ENCODE measurements at regions of chr17 and their contacts with region 1.

Region 1: GRCh38 chr17:42248351-42249179 is 27.6 kb downstream of the STAT5B start:
- DNase-seq: peak; percentile 50 to 92 (median 80)
- ATAC-seq: peak; percentile 85 to 91
- H3K4me3 Mint-ChIP-seq: peak overlapping the region; percentile 75 to 96 (median 90)
- H3K27ac Mint-ChIP-seq: peak overlapping the region; percentile 96 to 100 (median 98)
- H3K4me1 Mint-ChIP-seq: peaks cover 28 to 74% (median 64%) of the 10 kb centered on the region in 4 donors
- H3K27me3 Mint-ChIP-seq: no peaks in the 10 kb centered on the region

Region 2: DNA sequence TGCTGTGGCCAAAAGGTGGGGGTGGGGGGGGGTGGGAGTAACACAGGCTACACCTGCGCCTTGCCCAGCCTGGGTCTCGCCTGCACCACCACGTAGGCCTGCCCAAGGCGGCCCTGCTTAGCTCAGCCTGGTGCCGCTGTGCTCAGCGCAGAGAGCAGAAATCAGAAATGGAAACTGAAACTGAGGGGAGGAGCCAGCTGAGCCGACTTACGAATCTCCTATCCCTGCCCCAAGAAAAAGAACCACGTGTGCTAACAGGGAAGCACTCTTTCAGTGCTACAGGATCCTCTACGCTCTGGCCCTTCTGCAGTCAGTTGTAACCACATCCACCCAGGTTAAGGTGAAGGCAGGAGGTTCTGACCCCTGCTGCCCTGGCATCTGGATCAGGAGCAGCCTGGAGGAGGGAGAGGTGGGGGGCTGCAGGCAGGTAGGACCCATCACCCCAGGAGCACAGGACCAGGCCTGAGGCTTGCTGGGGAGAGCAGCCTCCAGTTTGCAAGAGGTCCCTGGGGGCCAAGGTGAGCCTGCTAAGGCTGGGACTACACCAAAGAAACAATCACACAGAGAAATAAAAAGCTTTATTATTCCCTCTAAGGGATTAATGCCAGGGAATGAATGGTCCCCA is 135.9 kb before region 1 on chr17 and contains the start of gene DHX58:
- POLR2A ChIA-PET with region 1: no interaction called
- DNase-seq: peak; percentile 56 to 87 (median 76)
- ATAC-seq: peak; percentile 88
- H3K4me3 Mint-ChIP-seq: peak within 1 kb of the TSS; percentile 86 to 98 (median 93)
- H3K27ac Mint-ChIP-seq: peak within 1 kb of the TSS; percentile 93 to 100 (median 97)
- H3K4me1 Mint-ChIP-seq: peaks cover 22 to 67% (median 60%) of the 10 kb centered on the region in 4 donors
- H3K27me3 Mint-ChIP-seq: no peaks in the 10 kb centered on the region
- polyA plus RNA-seq, gene DHX58: 7.3 to 21.7 (median 13.6) TPM

Region 3: DNA sequence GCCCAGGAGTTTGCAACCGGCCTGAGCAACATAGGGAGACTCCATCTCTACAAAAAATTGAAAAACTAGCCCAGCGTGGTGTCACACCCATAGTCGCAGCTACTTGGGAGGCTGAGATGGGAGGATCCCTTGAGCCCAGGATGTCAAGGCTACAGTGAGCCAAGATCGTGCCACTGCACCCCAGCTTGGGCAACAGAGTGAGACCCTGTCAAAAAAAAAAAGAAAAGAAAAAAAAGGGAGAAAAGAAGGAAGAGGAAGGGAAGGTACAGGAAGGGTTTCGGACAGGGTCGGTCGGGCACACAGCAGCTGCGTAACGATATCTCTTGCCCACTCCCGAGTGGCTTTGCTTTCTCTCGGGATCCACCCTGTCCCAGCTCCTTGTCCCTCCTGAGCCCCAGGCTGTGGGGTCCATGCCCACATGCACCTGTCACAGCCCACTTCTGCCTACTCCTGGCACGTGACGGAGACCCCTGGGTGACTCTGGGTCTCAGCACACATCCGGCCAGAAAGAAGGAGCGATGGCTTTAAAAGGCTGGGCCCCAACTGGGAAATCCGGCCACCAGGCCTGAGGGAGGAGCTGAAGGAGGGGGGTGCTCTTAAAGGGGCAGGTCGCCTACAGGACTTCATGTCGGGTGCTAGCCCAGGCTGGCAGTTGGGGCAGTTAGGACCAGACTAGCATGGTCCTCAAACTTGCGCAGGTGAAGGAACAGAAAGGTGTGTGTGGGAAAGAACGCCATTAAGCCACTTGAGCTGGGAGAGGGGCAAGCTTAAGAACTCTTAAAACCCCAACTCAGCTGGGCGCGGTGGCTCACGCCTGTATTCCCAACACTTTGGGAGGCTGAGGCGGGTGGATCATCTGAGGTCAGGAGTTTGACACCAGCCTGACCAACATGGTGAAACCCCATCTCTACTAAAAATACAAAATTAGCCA is 54.3 kb before region 1 on chr17 and contains the start of gene GHDC:
- POLR2A ChIA-PET with region 1: interaction called, 23 read pairs
- DNase-seq: peak; percentile 57 to 88 (median 74)
- ATAC-seq: peak; percentile 96 to 98
- H3K4me3 Mint-ChIP-seq: peak within 1 kb of the TSS; percentile 86 to 99 (median 96)
- H3K27ac Mint-ChIP-seq: peak within 1 kb of the TSS; percentile 84 to 96 (median 94)
- H3K4me1 Mint-ChIP-seq: peaks cover 16 to 35% (median 30%) of the 10 kb centered on the region in 4 donors
- H3K27me3 Mint-ChIP-seq: no peaks in the 10 kb centered on the region
- polyA plus RNA-seq, gene GHDC: 15.3 to 21.5 (median 17.3) TPM

Region 4: GRCh38 chr17:42266918-42267778 is 18.6 kb after region 1 on chr17:
- POLR2A ChIA-PET with region 1: interaction called, 142 read pairs
- DNase-seq: peak in 3 of 10 donors; percentile 17 to 54 (median 43)
- ATAC-seq: peak; percentile 75 to 91
- H3K4me3 Mint-ChIP-seq: peak overlapping the region in 3 of 10 donors; percentile 14 to 22 (median 19)
- H3K27ac Mint-ChIP-seq: peak overlapping the region; percentile 26 to 98 (median 70)
- H3K4me1 Mint-ChIP-seq: peaks cover 10 to 63% (median 55%) of the 10 kb centered on the region in 4 donors
- H3K27me3 Mint-ChIP-seq: no peaks in the 10 kb centered on the region

Region 5: GRCh38 chr17:42312285-42313130 is 63.9 kb after region 1 on chr17:
- POLR2A ChIA-PET with region 1: interaction called, 21 read pairs
- DNase-seq: peak; percentile 66 to 87 (median 74)
- ATAC-seq: peak; percentile 72 to 73
- H3K4me3 Mint-ChIP-seq: peak overlapping the region; percentile 61 to 86 (median 74)
- H3K27ac Mint-ChIP-seq: peak overlapping the region; percentile 84 to 93 (median 90)
- H3K4me1 Mint-ChIP-seq: peaks cover 32 to 80% (median 66%) of the 10 kb centered on the region in 4 donors
- H3K27me3 Mint-ChIP-seq: no peaks in the 10 kb centered on the region